Right cardiac atrium (tissue), 5 donors: ENCODE measurements at regions of chr15 and their contacts with region 1.

Region 1: DNA sequence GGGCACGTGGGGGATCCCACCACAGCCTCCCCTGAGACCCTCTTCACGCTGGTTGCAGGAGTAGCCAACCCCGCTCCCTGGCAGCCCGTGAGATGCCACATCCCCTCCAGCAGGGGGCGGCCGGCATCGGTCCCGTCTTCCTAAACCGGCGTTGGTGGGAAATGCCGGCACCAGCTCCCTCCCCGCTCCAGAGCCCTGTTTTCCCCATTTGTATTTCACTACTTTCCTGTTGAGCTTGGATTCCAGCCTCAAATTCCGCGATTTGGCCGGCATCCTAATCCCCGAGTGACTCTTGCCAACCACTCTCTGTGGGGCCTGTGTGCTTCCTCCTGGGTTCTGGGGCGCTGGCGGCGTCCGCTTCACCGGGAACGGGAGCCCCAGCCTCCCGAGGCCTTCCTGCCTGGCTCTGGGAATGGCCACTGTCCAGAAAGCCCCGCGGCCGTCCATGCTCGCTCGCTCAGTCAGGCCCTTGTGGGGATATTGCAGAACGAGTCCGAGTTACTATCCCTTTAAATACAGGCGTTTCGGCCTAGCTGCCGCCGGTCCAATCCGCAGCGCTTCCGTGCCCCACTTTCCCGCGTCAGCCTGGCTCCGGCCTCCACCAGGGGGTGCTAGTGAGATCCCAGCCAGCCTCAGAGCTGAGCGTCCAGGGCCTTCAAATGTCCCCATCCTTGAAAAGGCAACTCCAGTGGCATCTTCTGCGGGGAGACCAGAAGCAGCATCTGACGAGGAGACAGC is 8.1 kb upstream of the ADAMTS17 start:
- DNase-seq: peak; percentile 94 to 97 (median 97)
- ATAC-seq: peak; percentile 96 to 98
- H3K4me3 ChIP-seq: peak overlapping the region; percentile 68
- H3K27ac ChIP-seq: peak overlapping the region; percentile 97
- H3K4me1 ChIP-seq: peaks cover 2% of the 10 kb centered on the region
- H3K27me3 ChIP-seq: no peaks in the 10 kb centered on the region

Region 2: DNA sequence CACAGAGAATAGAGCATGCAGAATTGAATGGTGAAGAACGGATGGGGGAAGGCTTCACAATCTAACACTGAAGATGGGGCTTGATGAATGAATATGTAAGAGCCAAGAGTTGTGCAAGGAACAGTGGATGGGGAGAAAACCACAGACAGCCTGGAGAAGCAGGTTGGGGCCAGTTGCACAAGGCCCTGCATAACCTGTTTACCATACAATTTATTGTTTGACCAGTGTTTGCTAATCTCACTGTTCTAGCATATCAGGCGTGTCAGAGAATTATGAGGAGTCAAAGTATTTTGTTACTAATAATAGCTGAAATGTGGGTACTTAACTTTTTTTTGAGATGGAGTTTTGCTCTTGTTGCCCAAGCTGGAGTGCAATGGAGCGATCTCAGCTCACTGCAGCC is 215.7 kb after region 1 on chr15:
- intact Hi-C with region 1: loop called (anchors 5 to 10 kb)
- DNase-seq: no peak
- ATAC-seq: no peak
- H3K4me3 ChIP-seq: no peak overlapping the region
- H3K27ac ChIP-seq: no peak overlapping the region
- H3K4me1 ChIP-seq: no peaks in the 10 kb centered on the region
- H3K27me3 ChIP-seq: no peaks in the 10 kb centered on the region

Region 3: GRCh38 chr15:100572362-100572983 is 222.6 kb after region 1 on chr15:
- intact Hi-C with region 1: loop called (anchors 5 to 10 kb)
- DNase-seq: no peak
- ATAC-seq: no peak
- H3K4me3 ChIP-seq: no peak overlapping the region
- H3K27ac ChIP-seq: no peak overlapping the region
- H3K4me1 ChIP-seq: no peaks in the 10 kb centered on the region
- H3K27me3 ChIP-seq: no peaks in the 10 kb centered on the region